H1 (cell line): ENCODE measurements at regions of chr7 and their contacts with region 1.

Region 1: GRCh38 chr7:85041605-85042216 is 145.1 kb downstream of the SEMA3D start:
- DNase-seq: peak in 1 of 2 experiments; percentile 72
- H3K4me3 ChIP-seq: no peak overlapping the region
- H3K27ac ChIP-seq: no peak overlapping the region
- H3K4me1 ChIP-seq: no peaks in the 10 kb centered on the region
- H3K27me3 ChIP-seq: no peaks in the 10 kb centered on the region
- CTCF ChIP-seq: peak in 2 of 3 experiments; percentile 75 to 76; a peak in 3 of 4 replicates
- EP300 ChIP-seq: no peak
- POLR2A ChIP-seq: no peak
- RAD21 ChIP-seq: peak; percentile 91 to 95

Region 2: GRCh38 chr7:85186521-85187241 is 145.0 kb after region 1 on chr7 and contains the start of gene SEMA3D:
- CTCF ChIA-PET with region 1: interaction called, 10 read pairs
- POLR2A ChIA-PET with region 1: no interaction called
- DNase-seq: peak; percentile 63 to 90
- H3K4me3 ChIP-seq: peak within 1 kb of the TSS; percentile 69 to 82 (median 78)
- H3K27ac ChIP-seq: no peak within 1 kb of the TSS
- H3K4me1 ChIP-seq: peaks cover 2 to 11% (median 6%) of the 10 kb centered on the region in 4 experiments; a peak in 6 of 7 replicates
- H3K27me3 ChIP-seq: peaks cover 3 to 34% (median 24%) of the 10 kb centered on the region in 4 experiments
- CTCF ChIP-seq: peak; percentile 88 to 97 (median 92)
- EP300 ChIP-seq: no peak
- POLR2A ChIP-seq: no peak
- RAD21 ChIP-seq: peak; percentile 80 to 90
- total RNA-seq, gene SEMA3D: 3.5 and 4.1 TPM in 2 replicates

Region 3: DNA sequence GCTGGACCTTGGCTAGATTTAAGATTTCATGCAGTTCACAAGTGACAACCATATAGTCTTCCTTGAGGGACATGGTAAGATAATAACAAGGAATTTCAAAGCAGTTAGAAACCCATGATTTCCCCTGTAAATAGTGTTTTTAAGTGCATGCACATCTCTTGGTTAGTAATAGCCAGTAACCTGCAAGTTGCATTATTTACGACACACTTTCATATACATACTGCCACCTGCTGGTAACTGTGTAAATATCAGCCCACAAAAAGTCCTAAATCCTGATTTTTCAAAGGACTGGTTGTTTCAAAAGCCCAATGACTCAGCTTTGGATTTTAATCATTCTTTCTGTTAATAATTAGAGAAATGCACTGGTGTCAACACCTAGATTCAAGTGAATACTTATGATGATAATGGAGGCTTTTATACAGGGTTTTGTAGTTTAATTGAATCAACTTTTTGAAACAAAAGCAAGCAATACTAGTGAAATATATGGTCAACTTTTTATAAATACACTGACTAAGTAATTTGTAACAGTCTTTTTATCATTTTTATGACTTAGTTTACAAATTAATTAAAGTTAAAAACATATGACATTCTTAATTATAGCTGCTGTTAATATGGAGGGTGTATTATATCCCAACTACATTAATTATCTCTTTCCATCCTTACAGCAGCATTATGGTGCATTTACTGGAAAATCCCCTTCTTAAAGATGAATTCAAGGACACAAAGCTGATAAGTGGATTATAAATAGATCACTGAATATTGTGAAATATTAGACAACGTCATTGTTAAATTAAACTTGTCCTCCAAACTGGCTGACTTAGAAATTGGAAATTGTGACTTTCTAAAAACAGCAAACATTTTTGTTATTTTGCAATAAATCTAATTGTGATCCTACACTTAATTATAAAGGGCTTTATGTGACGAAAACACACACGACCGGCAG is 512.8 kb after region 1 on chr7:
- CTCF ChIA-PET with region 1: interaction called, 48 read pairs
- POLR2A ChIA-PET with region 1: no interaction called
- DNase-seq: no peak
- H3K4me3 ChIP-seq: no peak overlapping the region
- H3K27ac ChIP-seq: no peak overlapping the region
- H3K4me1 ChIP-seq: no peaks in the 10 kb centered on the region
- H3K27me3 ChIP-seq: no peaks in the 10 kb centered on the region
- CTCF ChIP-seq: peak in 2 of 3 experiments; percentile 52 to 59; a peak in 3 of 4 replicates
- EP300 ChIP-seq: no peak
- POLR2A ChIP-seq: no peak
- RAD21 ChIP-seq: peak; percentile 76 to 78

Region 4: GRCh38 chr7:85750454-85750949 is 708.8 kb after region 1 on chr7:
- CTCF ChIA-PET with region 1: interaction called, 12 read pairs
- POLR2A ChIA-PET with region 1: no interaction called
- DNase-seq: peak in 1 of 2 experiments; percentile 33
- H3K4me3 ChIP-seq: no peak overlapping the region; a peak in 1 of 8 replicates
- H3K27ac ChIP-seq: no peak overlapping the region
- H3K4me1 ChIP-seq: peaks cover 0 to 5% (median 2%) of the 10 kb centered on the region in 4 experiments; a peak in 3 of 7 replicates
- H3K27me3 ChIP-seq: no peaks in the 10 kb centered on the region; a peak in 2 of 7 replicates
- CTCF ChIP-seq: peak; percentile 11 to 84 (median 73)
- EP300 ChIP-seq: no peak
- POLR2A ChIP-seq: no peak
- RAD21 ChIP-seq: peak; percentile 81 to 84

Region 5: GRCh38 chr7:85829817-85830432 is 788.2 kb after region 1 on chr7:
- CTCF ChIA-PET with region 1: interaction called, 20 read pairs
- POLR2A ChIA-PET with region 1: no interaction called
- DNase-seq: no peak
- H3K4me3 ChIP-seq: no peak overlapping the region
- H3K27ac ChIP-seq: no peak overlapping the region
- H3K4me1 ChIP-seq: no peaks in the 10 kb centered on the region
- H3K27me3 ChIP-seq: no peaks in the 10 kb centered on the region
- CTCF ChIP-seq: no peak; a peak in 1 of 4 replicates
- EP300 ChIP-seq: no peak
- POLR2A ChIP-seq: no peak
- RAD21 ChIP-seq: peak in 1 of 2 experiments; percentile 59; a peak in 3 of 4 replicates